Body of pancreas (tissue), 4 donors: ENCODE measurements at regions of chr5 and their contacts with region 1.

Region 1: DNA sequence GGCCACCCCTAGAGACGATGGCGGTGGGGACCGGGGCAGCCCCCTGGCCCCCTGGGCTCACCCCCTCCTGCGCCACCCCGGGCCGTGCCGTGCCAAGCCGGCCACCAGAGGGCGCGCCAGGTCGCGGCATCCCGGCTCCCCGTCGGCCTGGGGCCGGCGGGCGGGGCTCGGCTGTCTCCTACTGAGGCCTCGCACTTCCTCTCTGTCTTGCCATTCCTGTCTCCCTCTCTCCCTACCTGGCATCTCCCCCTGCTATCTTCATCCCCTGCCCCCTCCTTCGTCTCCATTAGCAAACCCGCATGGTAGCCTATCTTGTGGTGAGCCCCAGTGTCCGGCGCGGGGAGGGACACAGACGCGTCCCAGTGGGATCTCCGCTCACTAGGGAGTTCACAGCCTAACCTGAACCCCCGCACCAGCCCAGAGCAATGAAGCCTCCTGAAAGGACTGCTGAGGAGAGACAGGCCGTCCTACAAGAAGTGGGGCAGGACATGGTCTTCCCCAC is 29.8 kb upstream of the FABP6 start:
- DNase-seq: peak; percentile 57 to 77 (median 69)
- ATAC-seq: peak; percentile 93
- H3K4me3 ChIP-seq: no peak overlapping the region
- H3K27ac ChIP-seq: no peak overlapping the region
- H3K4me1 ChIP-seq: peaks cover 11% of the 10 kb centered on the region
- H3K27me3 ChIP-seq: no peaks in the 10 kb centered on the region
- CTCF ChIP-seq: peak; percentile 53 to 94 (median 89)
- POLR2A ChIP-seq: no peak

Region 2: GRCh38 chr5:159163027-159163700 is 1036.3 kb before region 1 on chr5:
- intact Hi-C with region 1: no loop called
- DNase-seq: no peak
- ATAC-seq: no peak
- H3K4me3 ChIP-seq: no peak overlapping the region
- H3K27ac ChIP-seq: no peak overlapping the region
- H3K4me1 ChIP-seq: no peaks in the 10 kb centered on the region
- H3K27me3 ChIP-seq: no peaks in the 10 kb centered on the region
- CTCF ChIP-seq: no peak
- POLR2A ChIP-seq: no peak

Region 3: GRCh38 chr5:160021831-160022446 is 177.5 kb before region 1 on chr5:
- intact Hi-C with region 1: loop called (anchors 10 kb)
- DNase-seq: peak; percentile 50 to 73 (median 66)
- ATAC-seq: peak; percentile 94
- H3K4me3 ChIP-seq: no peak overlapping the region
- H3K27ac ChIP-seq: peak overlapping the region in 2 of 4 donors; percentile 40 to 63
- H3K4me1 ChIP-seq: peaks cover 21% of the 10 kb centered on the region
- H3K27me3 ChIP-seq: no peaks in the 10 kb centered on the region
- CTCF ChIP-seq: peak; percentile 55 to 91 (median 82)
- POLR2A ChIP-seq: no peak